ENCODE measurements at regions of chr12 and their contacts with region 1.

Region 1: DNA sequence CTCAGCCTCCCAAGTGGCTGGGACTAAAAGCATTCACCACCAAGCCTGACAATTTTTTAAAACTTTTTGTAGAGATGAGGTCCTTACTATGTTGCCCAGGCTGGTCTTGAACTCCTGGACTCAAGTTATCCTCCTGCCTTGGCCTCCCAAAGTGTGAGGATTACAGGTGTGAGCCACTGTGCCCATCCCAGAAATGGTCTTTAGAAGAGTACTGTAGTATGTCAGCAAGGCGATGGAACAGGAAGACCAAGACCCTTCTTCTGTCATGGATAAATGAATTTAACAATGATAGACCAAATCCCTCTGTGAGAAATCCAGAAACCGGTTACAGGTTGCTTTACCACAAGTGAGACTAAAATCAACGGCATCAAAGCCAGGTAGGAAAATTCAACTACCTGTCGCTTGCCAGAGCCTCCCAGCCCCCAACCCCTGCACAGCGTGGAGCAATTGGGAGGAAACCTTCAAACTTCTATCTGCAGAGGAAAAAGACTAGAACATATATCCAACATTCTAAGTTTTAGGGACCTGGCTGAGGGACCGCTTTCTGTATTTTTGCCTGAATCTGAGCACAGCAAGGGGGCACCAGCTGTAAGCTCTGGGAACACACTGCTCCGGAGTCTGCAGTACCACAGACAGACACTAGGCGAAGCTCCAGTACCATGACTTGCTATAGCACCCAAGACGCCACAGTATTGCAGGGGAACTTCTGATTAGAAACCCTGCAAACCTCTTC is 51.3 kb downstream of the CPSF6 start:
- DNase-seq: peak; percentile 67
- H3K4me3 Mint-ChIP-seq: no peak overlapping the region
- H3K27ac Mint-ChIP-seq: no peak overlapping the region
- H3K4me1 Mint-ChIP-seq: peaks cover 8% of the 10 kb centered on the region
- H3K27me3 Mint-ChIP-seq: peaks cover 53% of the 10 kb centered on the region

Region 2: DNA sequence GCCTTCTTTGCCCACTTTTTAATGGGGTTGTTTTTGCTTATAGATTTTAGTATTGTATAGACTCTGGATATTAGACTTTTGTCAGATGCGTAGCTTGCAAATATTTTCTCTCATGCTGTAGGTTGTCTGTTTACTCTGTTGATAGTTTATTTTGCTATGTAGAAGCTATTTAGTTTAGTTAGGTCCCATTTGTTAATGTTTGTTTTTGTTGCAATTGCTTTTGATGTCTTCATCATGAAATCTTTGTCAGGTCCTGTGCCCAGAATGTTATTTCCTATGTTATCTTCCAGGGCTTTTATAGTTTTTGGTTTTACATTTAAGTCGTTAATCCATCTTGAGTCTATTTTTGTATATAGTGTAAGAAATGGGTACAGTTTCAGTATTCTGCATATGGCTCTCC is 27.5 kb after region 1 on chr12:
- intact Hi-C with region 1: no loop called
- DNase-seq: no peak
- H3K4me3 Mint-ChIP-seq: no peak overlapping the region
- H3K27ac Mint-ChIP-seq: no peak overlapping the region
- H3K4me1 Mint-ChIP-seq: peaks cover 3% of the 10 kb centered on the region
- H3K27me3 Mint-ChIP-seq: peaks cover 15% of the 10 kb centered on the region

Region 3: DNA sequence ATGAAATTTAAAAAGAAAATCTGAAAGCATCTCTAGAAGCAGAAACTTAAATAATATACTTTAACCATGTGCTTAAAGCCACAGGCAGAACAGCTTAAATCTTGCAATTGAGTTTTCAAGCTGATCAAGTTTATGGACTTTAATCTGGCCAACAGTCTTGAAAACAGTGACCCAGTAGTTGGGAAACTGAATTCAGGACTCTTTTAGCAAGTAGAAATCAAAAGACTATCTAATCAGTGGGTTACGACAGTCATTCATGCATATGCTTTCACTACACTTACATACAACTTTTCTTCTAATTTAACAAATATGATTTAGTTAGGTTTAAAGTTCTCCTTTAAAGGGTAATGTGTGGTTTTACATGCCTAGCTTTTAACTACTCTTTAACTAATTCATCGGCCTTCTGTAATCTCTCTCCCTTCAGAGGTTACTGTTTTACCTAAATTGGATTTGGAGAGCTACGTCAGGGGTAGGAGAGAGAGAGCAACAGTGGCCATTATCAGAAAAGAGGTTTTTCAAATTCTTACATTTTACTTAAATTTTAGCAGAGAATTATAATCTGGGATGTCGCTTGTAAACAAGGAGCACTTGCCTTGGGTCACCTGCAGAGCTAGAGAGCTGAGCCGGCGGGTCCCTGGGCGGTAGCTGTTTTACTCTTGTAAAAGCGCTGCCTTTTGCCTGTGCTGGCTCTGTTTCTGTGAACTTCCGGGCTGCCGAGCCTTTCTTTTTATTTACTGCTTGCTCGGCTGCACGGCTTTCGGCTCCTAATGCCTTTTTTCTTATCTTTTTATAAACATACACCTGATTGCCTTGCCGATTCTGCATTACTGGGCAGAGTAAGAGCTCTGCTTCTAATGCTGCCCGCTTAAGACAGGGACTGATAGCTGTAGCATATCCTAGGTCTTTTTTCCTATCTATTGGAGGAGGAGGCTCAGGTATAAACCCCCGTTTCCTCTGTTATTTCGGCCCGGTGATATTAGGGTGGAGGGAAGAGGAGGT is 40.1 kb after region 1 on chr12:
- intact Hi-C with region 1: loop called (anchors 5 kb)
- DNase-seq: peak; percentile 31
- H3K4me3 Mint-ChIP-seq: peak overlapping the region; percentile 68
- H3K27ac Mint-ChIP-seq: peak overlapping the region; percentile 83
- H3K4me1 Mint-ChIP-seq: peaks cover 34% of the 10 kb centered on the region
- H3K27me3 Mint-ChIP-seq: peaks cover 7% of the 10 kb centered on the region

Region 4: GRCh38 chr12:69359531-69360347 is 69.0 kb after region 1 on chr12 and contains the start of gene YEATS4:
- intact Hi-C with region 1: no loop called
- DNase-seq: peak; percentile 88
- H3K4me3 Mint-ChIP-seq: peak within 1 kb of the TSS; percentile 84
- H3K27ac Mint-ChIP-seq: peak within 1 kb of the TSS; percentile 97
- H3K4me1 Mint-ChIP-seq: peaks cover 30% of the 10 kb centered on the region
- H3K27me3 Mint-ChIP-seq: peaks cover 3% of the 10 kb centered on the region
- total RNA-seq, gene YEATS4: 38.9 and 39.0 TPM in 2 replicates

Region 5: GRCh38 chr12:69639400-69640016 is 348.8 kb after region 1 on chr12:
- intact Hi-C with region 1: loop called (anchors 2 kb)
- DNase-seq: peak; percentile 34
- H3K4me3 Mint-ChIP-seq: no peak overlapping the region
- H3K27ac Mint-ChIP-seq: no peak overlapping the region
- H3K4me1 Mint-ChIP-seq: peaks cover 2% of the 10 kb centered on the region
- H3K27me3 Mint-ChIP-seq: peaks cover 4% of the 10 kb centered on the region

Measured in activated T-helper 2 cell treated with anti-CD3 and anti-CD28 coated beads, Interferon-gamma antibody, Interleukin-2, Interleukin-4, amounts not matched to agents 10 μg/mL and 5 μg/mL and 100 μg/mL, durations not matched to agents 14 hours and 24 hours and 36 hours (primary cell).